ENCODE measurements at regions of chr18 and their contacts with region 1.

Region 1: GRCh38 chr18:2961821-2962220 is 51.1 kb downstream of the LPIN2 start:
- DNase-seq: no peak
- ATAC-seq: peak; percentile 54; the same call in 2 of the 3 replicates
- H3K4me3 ChIP-seq: no peak overlapping the region
- H3K27ac ChIP-seq: no peak overlapping the region
- H3K4me1 ChIP-seq: no peaks in the 10 kb centered on the region
- H3K27me3 ChIP-seq: no peaks in the 10 kb centered on the region
- CTCF ChIP-seq: no peak
- EP300 ChIP-seq: no peak
- POLR2A ChIP-seq: no peak
- RAD21 ChIP-seq: no peak

Region 2: GRCh38 chr18:2971741-2972552 is 10.1 kb after region 1 on chr18:
- CTCF ChIA-PET with region 1: no interaction called
- POLR2A ChIA-PET with region 1: interaction called, 27 read pairs
- in situ Hi-C with region 1: no loop called
- intact Hi-C with region 1: no loop called
- DNase-seq: no peak
- ATAC-seq: 0 out of 3 replicates have a peak, but pooled peaks have one; percentile 22
- H3K4me3 ChIP-seq: no peak overlapping the region
- H3K27ac ChIP-seq: no peak overlapping the region
- H3K4me1 ChIP-seq: peaks cover 4 to 33% of the 10 kb centered on the region in 2 experiments; a peak in 4 of 5 replicates
- H3K27me3 ChIP-seq: no peaks in the 10 kb centered on the region
- CTCF ChIP-seq: no peak
- EP300 ChIP-seq: no peak
- POLR2A ChIP-seq: no peak
- RAD21 ChIP-seq: no peak